ENCODE measurements at regions of chr9 and their contacts with region 1.

Region 1: DNA sequence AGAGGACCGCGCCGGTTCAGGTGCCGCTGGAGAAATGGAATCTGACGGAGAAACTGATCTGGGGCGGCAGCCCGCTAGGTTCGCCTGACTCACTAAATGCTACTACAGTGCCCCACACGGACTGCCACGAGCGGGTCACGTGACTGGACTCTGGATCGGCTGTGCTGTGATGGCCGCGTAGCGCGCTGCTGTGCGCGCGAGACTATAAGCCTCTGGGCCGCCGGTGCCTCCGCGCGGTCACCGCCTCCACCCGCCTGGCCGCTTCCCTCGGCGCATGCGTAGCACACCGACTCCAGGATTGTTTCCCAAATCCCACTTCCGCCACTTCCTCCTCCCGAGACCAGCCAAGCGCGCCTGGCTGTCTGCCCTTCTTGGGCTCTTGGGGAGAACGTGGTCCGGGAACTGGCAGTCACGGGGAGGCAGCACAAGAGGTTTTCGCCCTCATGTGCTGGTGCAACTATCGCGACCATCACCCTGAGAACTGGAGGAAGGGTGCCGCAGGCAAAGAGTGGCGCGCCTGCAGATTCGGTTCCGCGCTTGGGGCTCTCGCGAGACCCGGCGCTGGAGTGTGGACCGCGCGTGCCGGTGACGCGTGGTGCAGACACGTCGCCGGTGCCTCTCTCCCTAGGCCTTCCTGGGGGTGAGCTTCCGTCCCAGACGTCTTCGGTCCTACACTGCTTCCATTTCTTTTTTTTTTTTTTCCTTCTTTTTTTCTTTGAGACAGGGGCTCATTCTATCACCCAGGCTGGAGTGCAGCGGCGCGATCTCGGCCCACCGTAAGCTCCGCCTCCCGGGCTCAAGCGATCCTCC is 35.8 kb upstream of the GLDC start:
- DNase-seq: peak; percentile 95
- H3K4me3 Mint-ChIP-seq: peak overlapping the region; percentile 96
- H3K27ac Mint-ChIP-seq: peak overlapping the region; percentile 100
- H3K4me1 Mint-ChIP-seq: peaks cover 19% of the 10 kb centered on the region
- H3K27me3 Mint-ChIP-seq: no peaks in the 10 kb centered on the region

Region 2: DNA sequence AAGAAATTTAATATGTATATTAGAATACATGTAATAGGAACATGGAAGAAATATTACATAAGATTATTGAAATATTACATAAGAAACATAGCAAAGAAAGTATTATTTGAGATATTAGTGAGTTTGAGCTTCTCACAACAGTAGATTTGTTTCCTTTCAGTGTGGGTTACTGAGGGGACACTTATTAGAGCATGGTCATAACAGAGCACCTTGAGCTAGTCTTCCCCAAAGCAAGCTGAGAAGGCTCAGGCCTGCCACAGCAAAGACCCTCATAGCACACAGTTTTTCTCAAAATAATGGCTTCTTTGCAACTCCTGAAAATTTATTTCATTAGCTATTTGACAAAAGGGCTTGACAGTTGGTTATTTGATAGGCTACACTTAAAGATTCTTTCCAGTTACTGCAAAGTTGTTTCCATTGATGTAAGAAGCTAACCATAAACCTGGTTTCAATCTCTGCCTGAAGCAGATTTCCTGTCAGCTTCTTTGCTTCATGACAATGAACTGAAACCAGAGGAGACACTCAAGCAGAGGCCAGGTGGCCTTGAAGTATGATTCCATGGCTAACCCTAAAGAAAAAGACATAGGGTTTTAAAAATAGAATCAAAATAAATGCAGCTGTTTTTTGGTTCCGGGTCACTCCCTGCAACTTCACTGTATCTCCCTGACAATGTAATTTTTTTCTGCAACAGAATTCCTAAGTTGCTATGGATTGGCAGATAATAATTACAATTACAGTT is 917.1 kb before region 1 on chr9:
- CTCF ChIA-PET with region 1: no interaction called
- POLR2A ChIA-PET with region 1: no interaction called
- intact Hi-C with region 1: loop called (anchors 10 kb)
- DNase-seq: peak; percentile 24
- H3K4me3 Mint-ChIP-seq: no peak overlapping the region
- H3K27ac Mint-ChIP-seq: peak overlapping the region; percentile 31
- H3K4me1 Mint-ChIP-seq: peaks cover 58% of the 10 kb centered on the region
- H3K27me3 Mint-ChIP-seq: no peaks in the 10 kb centered on the region

Region 3: GRCh38 chr9:6015278-6016157 is 665.8 kb before region 1 on chr9 and contains the start of gene RANBP6:
- CTCF ChIA-PET with region 1: no interaction called
- POLR2A ChIA-PET with region 1: no interaction called
- intact Hi-C with region 1: loop called (anchors 2 kb)
- DNase-seq: peak; percentile 96
- H3K4me3 Mint-ChIP-seq: peak within 1 kb of the TSS; percentile 96
- H3K27ac Mint-ChIP-seq: peak within 1 kb of the TSS; percentile 98
- H3K4me1 Mint-ChIP-seq: peaks cover 46% of the 10 kb centered on the region
- H3K27me3 Mint-ChIP-seq: no peaks in the 10 kb centered on the region
- total RNA-seq, gene RANBP6: 20.0 to 20.7 TPM

Region 4: DNA sequence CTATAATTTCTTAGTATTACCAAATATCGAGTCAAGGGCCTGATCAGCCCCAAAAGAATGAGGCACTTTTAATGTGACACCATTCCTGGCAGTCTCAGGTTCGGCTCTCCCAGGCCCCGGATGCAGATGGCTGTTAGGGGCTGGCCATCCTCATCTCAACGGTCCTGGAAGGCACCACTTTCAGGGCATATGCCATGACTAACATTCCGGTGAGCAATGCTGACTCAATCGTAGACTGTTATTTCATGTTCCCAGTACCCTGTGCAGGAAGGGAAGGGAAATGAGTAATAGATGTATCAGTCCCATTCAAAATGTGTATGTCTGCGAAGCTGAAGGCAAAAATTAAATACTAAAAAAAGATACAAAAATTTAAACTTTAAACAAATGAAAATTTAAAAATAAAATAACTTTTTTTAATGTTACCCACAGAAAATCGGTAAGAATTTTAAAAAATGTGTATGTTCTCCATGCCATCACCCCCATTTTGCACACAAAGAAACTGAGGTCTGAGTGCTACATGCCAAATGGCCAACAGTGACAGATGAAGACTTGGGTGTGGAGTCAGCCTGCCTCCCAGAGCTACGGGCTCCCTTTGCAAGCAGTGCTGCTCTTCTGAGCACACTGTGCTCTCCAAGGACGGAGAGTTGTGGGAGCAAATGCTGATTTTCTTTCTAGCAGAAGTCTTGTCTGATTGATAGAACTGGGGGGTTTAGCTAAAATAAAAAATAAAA is 114.8 kb before region 1 on chr9:
- CTCF ChIA-PET with region 1: no interaction called
- POLR2A ChIA-PET with region 1: interaction called, 4 read pairs
- intact Hi-C with region 1: loop called (anchors 1 kb)
- DNase-seq: peak; percentile 80
- H3K4me3 Mint-ChIP-seq: no peak overlapping the region
- H3K27ac Mint-ChIP-seq: peak overlapping the region; percentile 88
- H3K4me1 Mint-ChIP-seq: peaks cover 24% of the 10 kb centered on the region
- H3K27me3 Mint-ChIP-seq: peaks cover 3% of the 10 kb centered on the region

Region 5: GRCh38 chr9:6639622-6640021 is 41.7 kb before region 1 on chr9:
- CTCF ChIA-PET with region 1: no interaction called
- POLR2A ChIA-PET with region 1: no interaction called
- intact Hi-C with region 1: no loop called
- DNase-seq: no peak
- H3K4me3 Mint-ChIP-seq: no peak overlapping the region
- H3K27ac Mint-ChIP-seq: no peak overlapping the region
- H3K4me1 Mint-ChIP-seq: peaks cover 7% of the 10 kb centered on the region
- H3K27me3 Mint-ChIP-seq: peaks cover 40% of the 10 kb centered on the region

Region 6: GRCh38 chr9:6703898-6704639 is 22.7 kb after region 1 on chr9:
- CTCF ChIA-PET with region 1: interaction called, 3 read pairs
- POLR2A ChIA-PET with region 1: interaction called, 14 read pairs
- intact Hi-C with region 1: loop called (anchors 1 kb)
- DNase-seq: peak; percentile 82
- H3K4me3 Mint-ChIP-seq: peak overlapping the region; percentile 82
- H3K27ac Mint-ChIP-seq: peak overlapping the region; percentile 75
- H3K4me1 Mint-ChIP-seq: peaks cover 9% of the 10 kb centered on the region
- H3K27me3 Mint-ChIP-seq: no peaks in the 10 kb centered on the region

Region 7: DNA sequence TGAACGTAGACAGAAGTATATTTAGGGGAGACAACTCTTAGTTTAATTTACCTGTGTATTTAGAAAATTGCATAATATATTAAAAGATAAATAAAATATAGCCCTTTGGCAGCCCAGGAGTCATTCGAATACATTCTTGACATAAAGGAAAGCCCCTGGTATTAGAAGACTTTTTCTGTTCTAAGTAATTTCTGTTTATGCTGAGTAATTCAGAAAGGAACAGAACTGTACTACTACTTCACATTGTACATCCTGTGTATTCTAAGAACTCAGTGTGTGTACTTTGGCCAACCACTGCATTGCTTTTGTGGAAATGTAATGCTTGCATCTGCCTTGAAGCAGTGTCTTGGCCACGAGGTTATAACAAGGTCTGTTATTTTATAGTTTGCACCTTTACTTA is 212.8 kb after region 1 on chr9:
- CTCF ChIA-PET with region 1: no interaction called
- POLR2A ChIA-PET with region 1: no interaction called
- intact Hi-C with region 1: loop called (anchors 5 kb)
- DNase-seq: peak; percentile 25
- H3K4me3 Mint-ChIP-seq: no peak overlapping the region
- H3K27ac Mint-ChIP-seq: no peak overlapping the region
- H3K4me1 Mint-ChIP-seq: peaks cover 48% of the 10 kb centered on the region
- H3K27me3 Mint-ChIP-seq: no peaks in the 10 kb centered on the region